ENCODE measurements at regions of chr17 and their contacts with region 1.

Region 1: DNA sequence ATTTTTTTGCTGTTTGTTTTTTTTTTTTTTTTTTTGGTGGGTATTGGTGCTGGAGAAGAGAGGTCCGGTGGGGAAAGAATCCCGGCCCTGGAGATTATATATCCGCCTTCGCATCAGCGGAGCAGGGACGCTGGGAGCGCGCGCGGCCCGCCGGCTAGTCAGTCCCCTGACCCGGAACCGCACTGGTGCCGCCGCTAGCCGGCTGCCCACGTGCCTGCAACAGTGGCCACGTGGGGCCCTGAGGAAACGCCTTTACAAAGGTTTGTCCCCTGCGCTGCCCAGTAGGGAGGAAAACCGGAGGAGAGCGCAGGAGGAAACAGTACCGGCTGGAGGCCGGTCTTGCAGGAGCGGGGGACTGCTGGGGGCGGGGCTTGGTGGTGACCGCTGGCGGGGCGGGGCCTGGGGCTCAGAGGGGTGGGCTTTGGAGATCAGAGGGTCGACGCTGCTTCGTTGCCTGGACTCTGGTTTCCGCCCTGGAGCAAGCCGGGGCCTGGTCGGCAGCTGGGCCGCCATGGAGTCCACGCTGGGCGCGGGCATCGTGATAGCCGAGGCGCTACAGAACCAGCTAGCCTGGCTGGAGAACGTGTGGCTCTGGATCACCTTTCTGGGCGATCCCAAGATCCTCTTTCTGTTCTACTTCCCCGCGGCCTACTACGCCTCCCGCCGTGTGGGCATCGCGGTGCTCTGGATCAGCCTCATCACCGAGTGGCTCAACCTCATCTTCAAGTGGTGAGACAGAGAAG is at the start of gene G6PC3:
- H3K4me3 ChIP-seq: peak within 1 kb of the TSS; percentile 50
- H3K27ac ChIP-seq: peak within 1 kb of the TSS; percentile 97
- H3K4me1 ChIP-seq: peaks cover 12% of the 10 kb centered on the region
- CTCF ChIP-seq: peak; percentile 6

Region 2: GRCh38 chr17:43891851-43892646 is 178.6 kb before region 1 on chr17:
- CTCF ChIA-PET with region 1: no interaction called
- POLR2A ChIA-PET with region 1: no interaction called
- H3K4me3 ChIP-seq: no peak overlapping the region
- H3K27ac ChIP-seq: no peak overlapping the region
- H3K4me1 ChIP-seq: no peaks in the 10 kb centered on the region
- CTCF ChIP-seq: no peak

Region 3: GRCh38 chr17:44102845-44103622 is 32.4 kb after region 1 on chr17:
- CTCF ChIA-PET with region 1: no interaction called
- POLR2A ChIA-PET with region 1: interaction called, 11 read pairs
- H3K4me3 ChIP-seq: no peak overlapping the region
- H3K27ac ChIP-seq: no peak overlapping the region
- H3K4me1 ChIP-seq: no peaks in the 10 kb centered on the region; the same call in 1 of the 2 replicates
- CTCF ChIP-seq: peak; percentile 50; the same call in 1 of the 2 replicates

Region 4: GRCh38 chr17:44141717-44142285 is 71.2 kb after region 1 on chr17 and contains the start of gene HROB:
- CTCF ChIA-PET with region 1: interaction called, 3 read pairs
- POLR2A ChIA-PET with region 1: interaction called, 10 read pairs
- H3K4me3 ChIP-seq: peak within 1 kb of the TSS; percentile 98
- H3K27ac ChIP-seq: peak within 1 kb of the TSS; percentile 93
- H3K4me1 ChIP-seq: peaks cover 11% of the 10 kb centered on the region
- CTCF ChIP-seq: peak; percentile 98